Sigmoid colon (tissue), 7 donors: ENCODE measurements at regions of chr19 and their contacts with region 1.

Region 1: GRCh38 chr19:56105090-56105701 is 15.9 kb downstream of the ZNF787 start:
- DNase-seq: peak; percentile 95
- H3K4me3 ChIP-seq: peak overlapping the region in 3 of 4 donors; percentile 22 to 36 (median 33)
- H3K27ac ChIP-seq: peak overlapping the region; percentile 80 to 89 (median 82)
- H3K4me1 ChIP-seq: peaks cover 0 to 56% (median 56%) of the 10 kb centered on the region in 4 donors
- H3K27me3 ChIP-seq: no peaks in the 10 kb centered on the region
- CTCF ChIP-seq: peak; percentile 71 to 78 (median 78)
- EP300 ChIP-seq: peak in 2 of 4 donors; percentile 10 to 71
- POLR2A ChIP-seq: no peak

Region 2: GRCh38 chr19:56121180-56122167 is 16.3 kb after region 1 on chr19 and contains the start of gene ZNF787:
- intact Hi-C with region 1: loop called (anchors 2 kb)
- DNase-seq: peak; percentile 100
- H3K4me3 ChIP-seq: peak within 1 kb of the TSS; percentile 92 to 95 (median 93)
- H3K27ac ChIP-seq: peak within 1 kb of the TSS; percentile 95 to 98 (median 96)
- H3K4me1 ChIP-seq: peaks cover 0 to 43% (median 32%) of the 10 kb centered on the region in 4 donors
- H3K27me3 ChIP-seq: no peaks in the 10 kb centered on the region
- CTCF ChIP-seq: no peak
- EP300 ChIP-seq: peak in 1 of 4 donors; percentile 5
- POLR2A ChIP-seq: peak in 1 of 2 donors; percentile 22
- total RNA-seq, gene ZNF787: 11.0 to 14.1 (median 12.1) TPM

Region 3: GRCh38 chr19:56170261-56170660 is 65.1 kb after region 1 on chr19:
- intact Hi-C with region 1: loop called (anchors 1 kb)
- DNase-seq: no peak
- H3K4me3 ChIP-seq: no peak overlapping the region
- H3K27ac ChIP-seq: no peak overlapping the region
- H3K4me1 ChIP-seq: no peaks in the 10 kb centered on the region
- H3K27me3 ChIP-seq: peaks cover 0 to 22% (median under 1%) of the 10 kb centered on the region in 3 donors
- CTCF ChIP-seq: no peak
- EP300 ChIP-seq: no peak
- POLR2A ChIP-seq: no peak